Activated CD4-positive, alpha-beta memory T cell treated with anti-CD3 and anti-CD28 coated beads, Interleukin-2, amount 10 ng/mL, durations not matched to agents 7 days and 5 days (primary cell): ENCODE measurements at regions of chr5 and their contacts with region 1.

Region 1: GRCh38 chr5:65481635-65482295 is at the start of gene ADAMTS6:
- DNase-seq: peak; percentile 78
- H3K4me3 Mint-ChIP-seq: no peak within 1 kb of the TSS
- H3K27ac Mint-ChIP-seq: peak within 1 kb of the TSS; percentile 61
- H3K4me1 Mint-ChIP-seq: peaks cover 15% of the 10 kb centered on the region
- H3K27me3 Mint-ChIP-seq: no peaks in the 10 kb centered on the region
- total RNA-seq, gene ADAMTS6: 1.6 to 1.7 TPM

Region 2: GRCh38 chr5:64634997-64635686 is 846.6 kb before region 1 on chr5:
- CTCF ChIA-PET with region 1: interaction called, 10 read pairs
- POLR2A ChIA-PET with region 1: no interaction called
- DNase-seq: no peak
- H3K4me3 Mint-ChIP-seq: no peak overlapping the region
- H3K27ac Mint-ChIP-seq: no peak overlapping the region
- H3K4me1 Mint-ChIP-seq: peaks cover 10% of the 10 kb centered on the region
- H3K27me3 Mint-ChIP-seq: peaks cover 32% of the 10 kb centered on the region

Region 3: GRCh38 chr5:64811050-64811640 is 670.6 kb before region 1 on chr5:
- CTCF ChIA-PET with region 1: interaction called, 43 read pairs
- POLR2A ChIA-PET with region 1: interaction called, 6 read pairs
- DNase-seq: no peak
- H3K4me3 Mint-ChIP-seq: no peak overlapping the region
- H3K27ac Mint-ChIP-seq: no peak overlapping the region
- H3K4me1 Mint-ChIP-seq: peaks cover 10% of the 10 kb centered on the region
- H3K27me3 Mint-ChIP-seq: no peaks in the 10 kb centered on the region

Region 4: GRCh38 chr5:65035211-65036206 is 446.3 kb before region 1 on chr5:
- CTCF ChIA-PET with region 1: interaction called, 15 read pairs
- POLR2A ChIA-PET with region 1: interaction called, 16 read pairs
- DNase-seq: peak; percentile 86
- H3K4me3 Mint-ChIP-seq: peak overlapping the region; percentile 71
- H3K27ac Mint-ChIP-seq: peak overlapping the region; percentile 91
- H3K4me1 Mint-ChIP-seq: peaks cover 38% of the 10 kb centered on the region
- H3K27me3 Mint-ChIP-seq: no peaks in the 10 kb centered on the region

Region 5: GRCh38 chr5:65102828-65103711 is 378.7 kb before region 1 on chr5:
- CTCF ChIA-PET with region 1: interaction called, 13 read pairs
- POLR2A ChIA-PET with region 1: interaction called, 11 read pairs
- DNase-seq: peak; percentile 44
- H3K4me3 Mint-ChIP-seq: peak overlapping the region; percentile 69
- H3K27ac Mint-ChIP-seq: no peak overlapping the region
- H3K4me1 Mint-ChIP-seq: peaks cover 35% of the 10 kb centered on the region
- H3K27me3 Mint-ChIP-seq: peaks cover 23% of the 10 kb centered on the region